Activated T-helper 1 cell treated with anti-CD3 and anti-CD28 coated beads, Interleukin-12 subunit alpha, Interleukin-12 subunit beta, Interleukin-2, Interleukin-4 antibody, amounts not matched to agents 30 ng/mL and 10 ng/mL and 1 ng/mL, durations not matched to agents 14 hours and 24 hours and 36 hours (primary cell): ENCODE measurements at regions of chr16 and their contacts with region 1.

Region 1: DNA sequence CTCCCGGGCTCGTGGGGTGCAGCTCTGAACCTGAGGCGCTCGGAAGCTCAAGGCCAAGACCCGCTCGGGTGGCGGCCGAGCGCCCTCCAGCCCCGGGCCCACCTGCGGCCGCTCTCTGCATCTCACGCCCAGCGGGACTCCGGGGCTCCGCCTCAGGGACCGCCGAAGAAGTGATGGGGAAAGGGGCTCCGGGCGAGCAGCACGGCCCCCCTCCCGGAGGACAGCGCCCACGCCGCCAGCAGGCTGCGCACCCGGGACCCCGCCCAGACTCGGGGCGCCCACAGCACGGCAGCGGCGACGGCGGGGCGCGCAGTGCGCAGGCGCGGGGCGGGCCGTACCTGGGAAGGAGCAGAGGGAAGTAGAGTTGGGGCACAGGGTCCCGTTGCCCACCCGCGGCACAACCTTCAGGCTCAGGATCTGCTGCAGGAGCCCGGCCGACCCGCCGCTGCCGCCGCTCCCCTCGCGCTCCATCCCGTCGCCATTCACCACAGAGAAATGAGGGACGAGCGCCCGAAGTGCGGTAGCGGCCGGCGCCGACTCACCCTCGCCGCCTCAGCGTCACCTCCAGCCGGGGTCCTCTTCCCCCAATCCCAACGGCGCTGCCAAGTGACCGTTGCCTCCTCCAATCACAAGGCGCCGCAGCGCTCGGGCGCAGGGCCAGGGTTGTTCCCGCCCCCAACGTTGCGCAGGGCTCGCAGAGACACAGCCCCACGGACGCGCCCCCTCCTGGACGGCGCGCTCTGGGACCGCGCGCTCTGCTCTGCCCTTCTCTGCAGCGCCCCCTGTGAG is at the start of gene TMEM170A:
- DNase-seq: peak; percentile 99
- H3K4me3 Mint-ChIP-seq: peak within 1 kb of the TSS; percentile 94
- H3K27ac Mint-ChIP-seq: peak within 1 kb of the TSS; percentile 95
- H3K4me1 Mint-ChIP-seq: peaks cover 45% of the 10 kb centered on the region
- H3K27me3 Mint-ChIP-seq: peaks cover 7% of the 10 kb centered on the region
- total RNA-seq, gene TMEM170A: 42.1 and 42.7 TPM in 2 replicates

Region 2: GRCh38 chr16:74296432-74297144 is 1167.7 kb before region 1 on chr16 and contains the start of gene PSMD7:
- intact Hi-C with region 1: loop called (anchors 10 kb)
- DNase-seq: peak; percentile 88
- H3K4me3 Mint-ChIP-seq: peak within 1 kb of the TSS; percentile 90
- H3K27ac Mint-ChIP-seq: peak within 1 kb of the TSS; percentile 93
- H3K4me1 Mint-ChIP-seq: peaks cover 27% of the 10 kb centered on the region
- H3K27me3 Mint-ChIP-seq: no peaks in the 10 kb centered on the region
- total RNA-seq, gene PSMD7: 168 and 175 TPM in 2 replicates

Region 3: DNA sequence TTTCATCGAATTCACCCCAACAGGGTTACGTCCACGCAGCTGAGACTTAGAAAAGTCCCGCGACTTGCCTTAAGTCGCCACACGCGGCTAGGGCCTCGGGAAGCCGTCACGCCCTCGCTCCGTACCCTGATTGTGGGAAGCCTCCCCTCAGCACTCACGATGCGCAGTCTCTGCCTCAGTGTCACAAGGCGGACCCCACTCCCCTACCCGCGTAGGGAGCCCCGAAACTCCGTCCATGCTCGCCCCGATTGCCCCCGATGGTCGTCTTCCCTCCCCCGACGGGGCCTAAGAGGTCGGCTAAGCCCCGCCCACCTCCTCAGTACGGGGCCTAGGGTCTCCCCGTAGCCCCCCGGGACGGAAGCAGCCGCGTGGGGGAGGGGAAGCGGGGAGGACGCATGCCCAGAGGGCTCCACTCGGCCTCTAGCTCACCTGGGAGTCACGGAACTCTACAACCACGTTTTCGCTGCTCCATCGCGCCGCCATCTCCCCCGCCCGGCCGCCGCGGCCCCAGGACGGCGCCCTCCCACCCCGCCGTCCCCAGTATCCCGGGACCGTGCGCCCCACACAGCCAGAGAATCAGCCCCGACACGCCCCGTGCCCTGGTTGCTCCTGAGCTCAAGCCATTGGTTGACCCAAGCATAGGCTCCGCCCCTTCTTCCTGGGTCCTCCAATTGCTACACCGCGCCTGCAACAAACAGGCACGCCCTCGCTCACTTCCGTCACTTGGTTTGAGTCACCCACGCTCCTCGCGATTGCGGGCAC is 479.6 kb before region 1 on chr16 and contains the start of gene WDR59:
- intact Hi-C with region 1: loop called (anchors 1 kb)
- DNase-seq: peak; percentile 99
- H3K4me3 Mint-ChIP-seq: peak within 1 kb of the TSS; percentile 90
- H3K27ac Mint-ChIP-seq: peak within 1 kb of the TSS; percentile 90
- H3K4me1 Mint-ChIP-seq: peaks cover 14% of the 10 kb centered on the region
- H3K27me3 Mint-ChIP-seq: peaks cover 3% of the 10 kb centered on the region
- total RNA-seq, gene WDR59: 85.9 and 95.3 TPM in 2 replicates

Region 4: GRCh38 chr16:75238132-75238852 is 226.0 kb before region 1 on chr16:
- intact Hi-C with region 1: no loop called
- DNase-seq: no peak
- H3K4me3 Mint-ChIP-seq: no peak overlapping the region
- H3K27ac Mint-ChIP-seq: no peak overlapping the region
- H3K4me1 Mint-ChIP-seq: no peaks in the 10 kb centered on the region
- H3K27me3 Mint-ChIP-seq: peaks cover 7% of the 10 kb centered on the region

Region 5: GRCh38 chr16:75402821-75403475 is 61.4 kb before region 1 on chr16:
- intact Hi-C with region 1: loop called (anchors 2 kb)
- DNase-seq: no peak
- H3K4me3 Mint-ChIP-seq: no peak overlapping the region
- H3K27ac Mint-ChIP-seq: peak overlapping the region; percentile 15
- H3K4me1 Mint-ChIP-seq: peaks cover 12% of the 10 kb centered on the region
- H3K27me3 Mint-ChIP-seq: no peaks in the 10 kb centered on the region

Region 6: DNA sequence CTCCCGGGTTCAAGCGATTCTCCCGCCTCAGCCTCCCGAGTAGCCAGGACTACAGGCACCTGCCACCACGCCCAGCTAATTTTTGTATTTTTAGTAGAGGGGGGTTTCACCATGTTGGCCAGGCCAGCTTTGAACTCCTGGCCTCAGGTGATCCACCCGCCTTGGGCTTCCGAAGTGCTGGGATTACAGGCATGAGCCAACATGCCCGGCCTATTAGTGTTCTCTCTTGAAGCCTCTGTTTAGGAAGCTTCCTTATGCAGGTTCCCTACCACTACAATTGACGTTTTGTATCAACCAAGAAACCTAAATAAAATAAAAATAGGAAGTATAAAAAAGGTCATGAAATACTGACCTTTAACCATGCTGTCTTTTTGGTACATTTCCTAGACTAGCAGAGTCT is 55.6 kb after region 1 on chr16:
- intact Hi-C with region 1: loop called (anchors 1 kb)
- DNase-seq: no peak
- H3K4me3 Mint-ChIP-seq: no peak overlapping the region
- H3K27ac Mint-ChIP-seq: no peak overlapping the region
- H3K4me1 Mint-ChIP-seq: peaks cover 5% of the 10 kb centered on the region
- H3K27me3 Mint-ChIP-seq: peaks cover 5% of the 10 kb centered on the region

Region 7: GRCh38 chr16:75622761-75623605 is 158.7 kb after region 1 on chr16 and contains the start of gene ADAT1:
- intact Hi-C with region 1: loop called (anchors 1 kb)
- DNase-seq: peak; percentile 96
- H3K4me3 Mint-ChIP-seq: peak within 1 kb of the TSS; percentile 90
- H3K27ac Mint-ChIP-seq: peak within 1 kb of the TSS; percentile 98
- H3K4me1 Mint-ChIP-seq: peaks cover 54% of the 10 kb centered on the region
- H3K27me3 Mint-ChIP-seq: no peaks in the 10 kb centered on the region
- total RNA-seq, gene ADAT1: 59.0 and 60.9 TPM in 2 replicates

Region 8: GRCh38 chr16:77308163-77308561 is 1843.8 kb after region 1 on chr16:
- intact Hi-C with region 1: loop called (anchors 10 kb)
- DNase-seq: no peak
- H3K4me3 Mint-ChIP-seq: no peak overlapping the region
- H3K27ac Mint-ChIP-seq: peak overlapping the region; percentile 45
- H3K4me1 Mint-ChIP-seq: peaks cover 9% of the 10 kb centered on the region
- H3K27me3 Mint-ChIP-seq: no peaks in the 10 kb centered on the region